Natural killer cell (primary cell): ENCODE measurements at regions of chr7 and their contacts with region 1.

Region 1: DNA sequence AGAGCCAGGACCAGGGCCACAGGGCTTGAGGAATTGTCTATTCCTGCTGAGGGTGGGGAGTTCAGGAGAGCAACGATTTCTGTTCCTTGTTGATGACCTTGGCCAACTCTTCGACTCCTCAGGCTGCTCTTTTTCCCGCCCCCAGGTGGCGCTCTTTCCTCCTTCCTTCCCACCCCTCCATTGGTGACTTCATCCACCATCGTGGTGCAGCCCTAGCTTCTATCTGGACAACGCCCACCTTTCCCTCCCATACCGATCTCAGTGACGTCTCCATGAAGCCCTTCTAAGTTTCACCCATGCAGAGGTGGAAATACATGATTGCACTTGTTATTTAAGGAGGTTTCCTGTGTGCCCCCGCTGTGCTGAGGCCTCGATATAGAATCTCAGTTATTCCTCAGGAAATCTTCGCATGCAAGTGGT is 22.1 kb upstream of the CARD11 start:
- DNase-seq: peak; percentile 47 to 84
- ATAC-seq: peak in 2 of 3 donors; percentile 1 to 7
- H3K4me3 ChIP-seq: no peak overlapping the region
- H3K4me3 Mint-ChIP-seq: peak overlapping the region; percentile 85
- H3K27ac ChIP-seq: peak overlapping the region; percentile 78
- H3K27ac Mint-ChIP-seq: peak overlapping the region; percentile 89 to 93
- H3K4me1 ChIP-seq: peaks cover 85% of the 10 kb centered on the region
- H3K4me1 Mint-ChIP-seq: peaks cover 78 to 82% of the 10 kb centered on the region in 2 donors
- H3K27me3 ChIP-seq: no peaks in the 10 kb centered on the region
- H3K27me3 Mint-ChIP-seq: no peaks in the 10 kb centered on the region
- CTCF ChIP-seq: peak; percentile 59

Region 2: GRCh38 chr7:2597273-2597640 is 468.5 kb before region 1 on chr7:
- intact Hi-C with region 1: no loop called
- DNase-seq: no peak
- ATAC-seq: no peak
- H3K4me3 ChIP-seq: no peak overlapping the region
- H3K4me3 Mint-ChIP-seq: no peak overlapping the region
- H3K27ac ChIP-seq: no peak overlapping the region
- H3K27ac Mint-ChIP-seq: no peak overlapping the region
- H3K4me1 ChIP-seq: no peaks in the 10 kb centered on the region
- H3K4me1 Mint-ChIP-seq: no peaks in the 10 kb centered on the region
- H3K27me3 ChIP-seq: no peaks in the 10 kb centered on the region
- H3K27me3 Mint-ChIP-seq: no peaks in the 10 kb centered on the region
- CTCF ChIP-seq: no peak

Region 3: GRCh38 chr7:2903682-2904162 is 162.0 kb before region 1 on chr7:
- intact Hi-C with region 1: loop called (anchors 2 kb)
- DNase-seq: peak in 1 of 2 donors; percentile 22
- ATAC-seq: peak; percentile 25 to 38 (median 27)
- H3K4me3 ChIP-seq: no peak overlapping the region
- H3K4me3 Mint-ChIP-seq: peak overlapping the region; percentile 47
- H3K27ac ChIP-seq: peak overlapping the region; percentile 59
- H3K27ac Mint-ChIP-seq: peak overlapping the region; percentile 83 to 88
- H3K4me1 ChIP-seq: peaks cover 37% of the 10 kb centered on the region
- H3K4me1 Mint-ChIP-seq: peaks cover 35 to 52% of the 10 kb centered on the region in 2 donors
- H3K27me3 ChIP-seq: no peaks in the 10 kb centered on the region
- H3K27me3 Mint-ChIP-seq: no peaks in the 10 kb centered on the region
- CTCF ChIP-seq: no peak

Region 4: DNA sequence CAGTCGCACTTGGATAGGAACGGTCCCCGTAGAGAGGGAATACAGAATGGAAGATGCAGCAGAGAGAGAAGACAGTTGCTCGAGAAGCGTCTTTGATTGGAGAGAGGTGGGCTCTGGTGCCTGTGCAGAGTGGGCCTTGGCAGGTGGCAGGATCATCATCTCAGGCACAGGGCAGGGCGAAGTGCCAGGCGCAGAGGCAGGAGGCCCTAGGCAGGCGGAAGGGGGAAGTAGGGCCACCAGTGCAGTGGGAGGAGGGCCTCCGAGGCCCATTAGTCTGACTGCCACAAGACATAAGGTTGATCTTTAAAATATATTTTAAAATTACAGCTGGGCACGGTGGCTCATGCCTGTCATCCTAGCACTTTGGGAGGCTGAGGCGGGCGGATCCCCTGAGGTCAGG is 32.2 kb before region 1 on chr7:
- intact Hi-C with region 1: loop called (anchors 5 kb)
- DNase-seq: no peak
- ATAC-seq: no peak
- H3K4me3 ChIP-seq: no peak overlapping the region
- H3K4me3 Mint-ChIP-seq: peak overlapping the region; percentile 6
- H3K27ac ChIP-seq: no peak overlapping the region
- H3K27ac Mint-ChIP-seq: peak overlapping the region; percentile 78 to 79
- H3K4me1 ChIP-seq: peaks cover 54% of the 10 kb centered on the region
- H3K4me1 Mint-ChIP-seq: peaks cover 49 to 75% of the 10 kb centered on the region in 2 donors
- H3K27me3 ChIP-seq: no peaks in the 10 kb centered on the region
- H3K27me3 Mint-ChIP-seq: no peaks in the 10 kb centered on the region
- CTCF ChIP-seq: no peak

Region 5: GRCh38 chr7:3078514-3078913 is 12.8 kb after region 1 on chr7:
- intact Hi-C with region 1: no loop called
- DNase-seq: no peak
- ATAC-seq: no peak
- H3K4me3 ChIP-seq: no peak overlapping the region
- H3K4me3 Mint-ChIP-seq: no peak overlapping the region
- H3K27ac ChIP-seq: no peak overlapping the region
- H3K27ac Mint-ChIP-seq: no peak overlapping the region
- H3K4me1 ChIP-seq: peaks cover 11% of the 10 kb centered on the region
- H3K4me1 Mint-ChIP-seq: peaks cover 22 to 29% of the 10 kb centered on the region in 2 donors
- H3K27me3 ChIP-seq: no peaks in the 10 kb centered on the region
- H3K27me3 Mint-ChIP-seq: no peaks in the 10 kb centered on the region
- CTCF ChIP-seq: no peak

Region 6: GRCh38 chr7:3092468-3092867 is 26.7 kb after region 1 on chr7:
- intact Hi-C with region 1: loop called (anchors 1 kb)
- DNase-seq: peak; percentile 74 to 92
- ATAC-seq: peak; percentile 83 to 88 (median 86)
- H3K4me3 ChIP-seq: no peak overlapping the region
- H3K4me3 Mint-ChIP-seq: peak overlapping the region; percentile 85
- H3K27ac ChIP-seq: peak overlapping the region; percentile 95
- H3K27ac Mint-ChIP-seq: peak overlapping the region; percentile 95 to 100
- H3K4me1 ChIP-seq: peaks cover 77% of the 10 kb centered on the region
- H3K4me1 Mint-ChIP-seq: peaks cover 61 to 68% of the 10 kb centered on the region in 2 donors
- H3K27me3 ChIP-seq: no peaks in the 10 kb centered on the region
- H3K27me3 Mint-ChIP-seq: no peaks in the 10 kb centered on the region
- CTCF ChIP-seq: no peak

Region 7: GRCh38 chr7:3106361-3106826 is 40.7 kb after region 1 on chr7:
- intact Hi-C with region 1: loop called (anchors 1 kb)
- DNase-seq: peak in 1 of 2 donors; percentile 42
- ATAC-seq: peak; percentile 39 to 59 (median 57)
- H3K4me3 ChIP-seq: no peak overlapping the region
- H3K4me3 Mint-ChIP-seq: peak overlapping the region; percentile 77
- H3K27ac ChIP-seq: peak overlapping the region; percentile 93
- H3K27ac Mint-ChIP-seq: peak overlapping the region; percentile 94 to 95
- H3K4me1 ChIP-seq: peaks cover 83% of the 10 kb centered on the region
- H3K4me1 Mint-ChIP-seq: peaks cover 79 to 92% of the 10 kb centered on the region in 2 donors
- H3K27me3 ChIP-seq: no peaks in the 10 kb centered on the region
- H3K27me3 Mint-ChIP-seq: no peaks in the 10 kb centered on the region
- CTCF ChIP-seq: no peak

Region 8: GRCh38 chr7:3146571-3147226 is 81.0 kb after region 1 on chr7:
- intact Hi-C with region 1: loop called (anchors 2 kb)
- DNase-seq: peak in 1 of 2 donors; percentile 37
- ATAC-seq: peak; percentile 67 to 86 (median 86)
- H3K4me3 ChIP-seq: no peak overlapping the region
- H3K4me3 Mint-ChIP-seq: peak overlapping the region; percentile 73
- H3K27ac ChIP-seq: no peak overlapping the region
- H3K27ac Mint-ChIP-seq: peak overlapping the region; percentile 65 to 68
- H3K4me1 ChIP-seq: peaks cover 26% of the 10 kb centered on the region
- H3K4me1 Mint-ChIP-seq: peaks cover 23 to 24% of the 10 kb centered on the region in 2 donors
- H3K27me3 ChIP-seq: no peaks in the 10 kb centered on the region
- H3K27me3 Mint-ChIP-seq: no peaks in the 10 kb centered on the region
- CTCF ChIP-seq: no peak